HEK293 (cell line): ENCODE measurements at regions of chr9 and their contacts with region 1.

Region 1: DNA sequence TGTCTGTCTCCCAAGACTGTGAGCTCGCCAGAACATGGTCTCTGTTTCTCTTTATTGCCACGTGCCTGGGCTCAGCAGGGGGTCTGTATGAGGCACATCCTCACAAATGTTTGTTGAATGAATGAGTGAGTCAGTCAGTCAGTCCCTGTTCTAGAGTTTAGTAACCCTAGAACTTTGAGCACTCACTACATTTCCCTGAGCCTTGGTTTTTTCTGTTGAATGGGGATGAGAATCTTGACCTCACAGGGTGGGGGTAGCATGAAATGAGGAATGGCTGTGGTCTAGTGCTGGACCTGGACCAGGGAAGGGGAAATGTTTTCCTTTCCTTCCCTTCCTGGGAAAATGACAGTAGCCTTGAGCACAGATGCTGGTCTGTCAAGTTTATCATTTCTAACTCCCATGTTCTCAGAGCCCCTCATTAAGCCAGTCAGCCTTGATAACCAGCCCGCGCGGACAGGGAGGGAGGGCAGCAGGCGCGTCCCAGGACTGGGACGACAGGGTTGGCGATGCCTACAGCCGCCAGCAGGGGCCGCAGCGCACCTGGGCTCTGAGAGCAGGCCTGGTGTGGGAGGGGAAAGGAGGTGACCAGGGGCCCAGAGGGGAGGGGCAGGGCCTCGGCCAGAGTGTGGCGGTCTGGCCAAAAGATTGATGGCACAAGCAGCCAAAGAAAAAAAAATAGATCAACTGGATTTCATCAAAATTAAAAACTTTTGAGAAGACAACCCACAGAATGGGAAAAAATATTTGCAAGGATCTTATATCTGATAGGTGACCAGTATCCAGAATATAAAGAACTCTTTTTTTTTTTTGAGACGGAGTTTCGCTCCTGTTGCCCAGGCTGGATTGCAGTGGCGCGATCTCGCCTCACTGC is 24.1 kb upstream of the WNK2 start:
- H3K4me3 ChIP-seq: no peak overlapping the region
- H3K27ac ChIP-seq: no peak overlapping the region
- H3K4me1 ChIP-seq: no peaks in the 10 kb centered on the region
- CTCF ChIP-seq: peak; percentile 93

Region 2: DNA sequence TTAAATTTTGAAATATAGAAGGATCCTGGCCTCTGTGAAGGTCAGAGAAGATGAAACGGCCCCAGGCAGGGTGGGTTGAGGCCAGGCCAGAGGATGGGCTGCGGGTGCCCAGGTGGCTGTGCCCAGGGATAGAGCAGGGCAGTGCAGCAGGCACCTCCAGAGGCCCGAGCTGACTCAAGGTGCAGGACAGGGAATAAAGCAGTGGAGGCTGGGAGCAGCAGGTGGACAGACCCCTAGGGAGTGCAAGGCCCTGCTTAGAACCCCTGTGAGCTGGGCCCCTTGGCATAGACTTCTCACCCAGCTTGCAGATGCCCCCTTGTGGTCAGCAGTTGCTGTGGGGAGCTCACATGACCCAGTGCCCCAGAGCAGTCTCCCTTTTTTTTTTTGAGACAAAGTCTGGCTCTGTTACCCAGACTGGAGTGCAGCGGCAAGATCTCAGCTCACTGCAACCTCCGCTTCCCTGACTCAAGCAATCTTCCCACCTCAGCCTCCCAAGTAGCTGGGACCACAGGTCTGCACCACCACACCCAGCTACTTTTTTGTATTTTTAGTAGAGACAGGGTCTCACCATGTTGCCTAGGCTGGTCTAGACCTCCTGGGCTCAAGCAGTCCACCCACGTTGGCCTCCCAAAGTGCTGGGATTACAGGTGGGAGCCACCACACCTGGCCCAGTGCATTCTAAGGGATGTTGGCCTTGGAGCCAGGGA is 142.9 kb after region 1 on chr9:
- CTCF ChIA-PET with region 1: interaction called, 29 read pairs
- POLR2A ChIA-PET with region 1: no interaction called
- H3K4me3 ChIP-seq: no peak overlapping the region
- H3K27ac ChIP-seq: no peak overlapping the region
- H3K4me1 ChIP-seq: no peaks in the 10 kb centered on the region
- CTCF ChIP-seq: no peak